Activated CD4-positive, alpha-beta memory T cell treated with anti-CD3 and anti-CD28 coated beads for 36 hours (primary cell): ENCODE measurements at regions of chr16 and their contacts with region 1.

Region 1: GRCh38 chr16:6016530-6017184 is 919.1 kb upstream of the EEF2KMT start:
- DNase-seq: no peak
- H3K4me3 Mint-ChIP-seq: no peak overlapping the region
- H3K27ac Mint-ChIP-seq: no peak overlapping the region
- H3K4me1 Mint-ChIP-seq: no peaks in the 10 kb centered on the region
- H3K27me3 Mint-ChIP-seq: peaks cover 7% of the 10 kb centered on the region

Region 2: DNA sequence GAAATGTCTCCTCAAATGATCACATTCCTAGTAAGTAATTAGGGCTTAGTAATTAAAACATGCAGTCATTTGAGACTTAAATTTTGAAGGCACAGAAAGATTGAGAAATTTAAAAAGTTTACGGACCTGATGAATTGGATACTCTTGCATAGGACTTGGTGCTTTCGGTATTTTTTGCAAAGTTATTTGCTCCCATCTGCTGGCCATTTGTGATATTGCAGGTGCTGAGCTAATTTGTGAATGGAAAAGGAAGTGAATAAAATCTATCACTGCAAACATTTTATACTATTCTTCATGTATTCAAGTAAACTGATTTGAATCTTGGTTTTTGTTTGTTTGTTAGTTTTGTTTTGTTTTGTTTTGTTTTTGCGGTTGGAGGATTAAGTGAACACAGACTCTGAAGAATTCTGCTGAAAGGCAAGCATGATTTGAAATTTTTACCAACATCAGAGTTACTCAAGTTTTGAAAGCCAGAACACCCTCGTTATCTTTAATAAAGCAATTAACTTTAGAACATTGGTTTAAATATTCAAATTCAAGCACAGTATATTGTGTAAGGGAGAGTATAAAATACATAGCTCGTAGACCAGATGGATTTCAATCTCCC is 626.5 kb after region 1 on chr16:
- CTCF ChIA-PET with region 1: no interaction called
- POLR2A ChIA-PET with region 1: no interaction called
- intact Hi-C with region 1: loop called (anchors 5 kb)
- DNase-seq: peak; percentile 58
- H3K4me3 Mint-ChIP-seq: no peak overlapping the region
- H3K27ac Mint-ChIP-seq: no peak overlapping the region
- H3K4me1 Mint-ChIP-seq: peaks cover 8% of the 10 kb centered on the region
- H3K27me3 Mint-ChIP-seq: peaks cover 9% of the 10 kb centered on the region